ENCODE measurements at regions of chr2 and their contacts with region 1.

Region 1: DNA sequence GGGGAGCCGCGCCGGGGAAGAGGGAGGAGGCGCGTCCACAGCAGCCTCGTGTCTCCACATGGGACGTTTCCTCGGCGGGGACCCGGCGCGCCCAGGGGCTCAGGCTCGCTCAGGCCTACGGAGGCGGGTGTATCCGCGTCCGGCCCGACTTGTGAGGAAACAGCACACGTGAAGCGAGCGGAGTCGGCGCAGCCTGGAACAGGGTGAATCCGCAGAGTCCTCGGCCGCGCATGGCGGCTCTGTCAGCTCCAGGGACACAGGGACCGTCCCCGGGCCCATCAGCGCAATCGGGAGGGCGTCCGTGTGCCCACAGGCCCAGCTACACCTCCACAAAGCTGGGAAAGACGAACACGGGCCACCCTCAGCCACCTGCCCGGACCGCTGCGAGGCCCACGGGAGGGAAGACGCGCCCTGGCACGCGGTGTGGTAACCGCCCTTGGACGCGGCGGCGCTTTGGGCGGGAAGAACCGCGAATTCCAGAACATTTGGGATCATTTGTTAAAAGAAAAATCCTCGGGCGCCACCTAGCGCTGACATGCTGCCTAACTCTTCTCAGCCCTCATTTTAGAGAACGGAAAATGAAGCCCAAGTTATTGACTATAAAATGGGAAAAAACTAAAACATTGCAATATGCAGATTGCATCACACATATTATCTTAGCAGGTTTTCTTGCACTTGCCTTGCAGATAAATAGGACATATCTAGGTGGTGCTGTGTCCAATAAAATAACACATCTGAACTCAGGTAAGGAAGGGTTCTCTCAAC is 40.4 kb downstream of the TMEM18 start:
- DNase-seq: peak; percentile 62
- H3K4me3 Mint-ChIP-seq: peak overlapping the region; percentile 59
- H3K27ac Mint-ChIP-seq: no peak overlapping the region
- H3K4me1 Mint-ChIP-seq: peaks cover 4% of the 10 kb centered on the region
- H3K27me3 Mint-ChIP-seq: peaks cover 3% of the 10 kb centered on the region

Region 2: GRCh38 chr2:529425-529824 is 107.4 kb before region 1 on chr2:
- CTCF ChIA-PET with region 1: interaction called, 11 read pairs
- POLR2A ChIA-PET with region 1: no interaction called
- intact Hi-C with region 1: loop called (anchors 1 kb)
- DNase-seq: no peak
- H3K4me3 Mint-ChIP-seq: no peak overlapping the region
- H3K27ac Mint-ChIP-seq: no peak overlapping the region
- H3K4me1 Mint-ChIP-seq: no peaks in the 10 kb centered on the region
- H3K27me3 Mint-ChIP-seq: peaks cover 15% of the 10 kb centered on the region

Region 3: GRCh38 chr2:667332-667999 is 30.6 kb after region 1 on chr2:
- CTCF ChIA-PET with region 1: interaction called, 16 read pairs
- POLR2A ChIA-PET with region 1: no interaction called
- intact Hi-C with region 1: no loop called
- DNase-seq: peak; percentile 44
- H3K4me3 Mint-ChIP-seq: no peak overlapping the region
- H3K27ac Mint-ChIP-seq: no peak overlapping the region
- H3K4me1 Mint-ChIP-seq: peaks cover 18% of the 10 kb centered on the region
- H3K27me3 Mint-ChIP-seq: no peaks in the 10 kb centered on the region

Measured in activated CD4-positive, alpha-beta memory T cell treated with anti-CD3 and anti-CD28 coated beads for 36 hours (primary cell).